ENCODE measurements at regions of chr5 and their contacts with region 1.

Region 1: GRCh38 chr5:155728146-155728856 is 598.7 kb upstream of the SGCD start:
- DNase-seq: no peak
- ATAC-seq: no peak
- H3K4me3 ChIP-seq: no peak overlapping the region
- H3K4me3 Mint-ChIP-seq: no peak overlapping the region
- H3K27ac ChIP-seq: no peak overlapping the region
- H3K27ac Mint-ChIP-seq: no peak overlapping the region
- H3K4me1 ChIP-seq: no peaks in the 10 kb centered on the region
- H3K4me1 Mint-ChIP-seq: peaks cover 0 to 4% (median 0%) of the 10 kb centered on the region in 7 donors
- H3K27me3 ChIP-seq: peaks cover 0 to 7% of the 10 kb centered on the region in 2 donors
- H3K27me3 Mint-ChIP-seq: peaks cover 60 to 71% (median 60%) of the 10 kb centered on the region in 5 donors

Region 2: DNA sequence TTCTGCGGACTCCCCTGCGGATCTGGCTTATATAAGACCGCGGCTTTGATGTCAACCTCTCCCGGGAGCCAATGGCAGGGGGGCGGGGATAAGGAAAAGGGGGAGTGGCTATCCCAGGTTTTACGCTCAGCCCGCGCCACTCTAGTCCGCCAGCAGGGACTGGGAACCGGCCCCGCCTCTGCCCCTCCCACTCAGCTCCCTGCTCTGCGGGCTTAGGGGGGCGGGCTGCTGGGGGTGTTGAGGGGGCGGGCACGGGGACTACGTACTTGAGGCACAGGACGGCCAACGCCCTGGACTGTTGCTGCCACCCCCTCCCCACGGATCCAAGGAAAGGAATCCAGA is 1250.1 kb before region 1 on chr5 and contains the start of gene HAND1:
- CTCF ChIA-PET with region 1: no interaction called
- POLR2A ChIA-PET with region 1: no interaction called
- intact Hi-C with region 1: loop called in 1 of 2 experiments (anchors 10 kb)
- DNase-seq: no peak
- ATAC-seq: no peak
- H3K4me3 ChIP-seq: no peak within 1 kb of the TSS
- H3K4me3 Mint-ChIP-seq: peak within 1 kb of the TSS; percentile 23 to 86 (median 69)
- H3K27ac ChIP-seq: no peak within 1 kb of the TSS
- H3K27ac Mint-ChIP-seq: peak within 1 kb of the TSS in 1 of 9 donors; percentile 73
- H3K4me1 ChIP-seq: peaks cover 18 to 44% of the 10 kb centered on the region in 2 donors
- H3K4me1 Mint-ChIP-seq: peaks cover 34 to 66% (median 59%) of the 10 kb centered on the region in 7 donors
- H3K27me3 ChIP-seq: peaks cover 14 to 76% of the 10 kb centered on the region in 2 donors
- H3K27me3 Mint-ChIP-seq: peaks cover 81 to 96% (median 85%) of the 10 kb centered on the region in 5 donors
- total RNA-seq, gene HAND1: not detected

Region 3: GRCh38 chr5:154940772-154941620 is 787.3 kb before region 1 on chr5 and contains the start of gene MRPL22:
- CTCF ChIA-PET with region 1: no interaction called
- POLR2A ChIA-PET with region 1: no interaction called
- intact Hi-C with region 1: no loop called
- DNase-seq: peak; percentile 85 to 99 (median 94)
- ATAC-seq: peak; percentile 84
- H3K4me3 ChIP-seq: peak within 1 kb of the TSS; percentile 76
- H3K4me3 Mint-ChIP-seq: peak within 1 kb of the TSS; percentile 89 to 100 (median 96)
- H3K27ac ChIP-seq: peak within 1 kb of the TSS; percentile 94
- H3K27ac Mint-ChIP-seq: peak within 1 kb of the TSS; percentile 93 to 98 (median 96)
- H3K4me1 ChIP-seq: peaks cover 22 to 25% of the 10 kb centered on the region in 2 donors
- H3K4me1 Mint-ChIP-seq: peaks cover 23 to 62% (median 47%) of the 10 kb centered on the region in 7 donors
- H3K27me3 ChIP-seq: no peaks in the 10 kb centered on the region
- H3K27me3 Mint-ChIP-seq: no peaks in the 10 kb centered on the region
- total RNA-seq, gene MRPL22: 18.4 to 62.0 (median 24.9) TPM

Region 4: GRCh38 chr5:155746367-155747038 is 18.2 kb after region 1 on chr5:
- CTCF ChIA-PET with region 1: no interaction called
- POLR2A ChIA-PET with region 1: no interaction called
- intact Hi-C with region 1: no loop called
- DNase-seq: no peak
- ATAC-seq: no peak
- H3K4me3 ChIP-seq: no peak overlapping the region
- H3K4me3 Mint-ChIP-seq: no peak overlapping the region
- H3K27ac ChIP-seq: no peak overlapping the region
- H3K27ac Mint-ChIP-seq: no peak overlapping the region
- H3K4me1 ChIP-seq: no peaks in the 10 kb centered on the region
- H3K4me1 Mint-ChIP-seq: no peaks in the 10 kb centered on the region
- H3K27me3 ChIP-seq: no peaks in the 10 kb centered on the region
- H3K27me3 Mint-ChIP-seq: peaks cover 0 to 10% (median 0%) of the 10 kb centered on the region in 5 donors

Measured in naive thymus-derived CD4-positive, alpha-beta T cell (primary cell).